Vagina (tissue), 2 donors: ENCODE measurements at regions of chr11 and their contacts with region 1.

Region 1: DNA sequence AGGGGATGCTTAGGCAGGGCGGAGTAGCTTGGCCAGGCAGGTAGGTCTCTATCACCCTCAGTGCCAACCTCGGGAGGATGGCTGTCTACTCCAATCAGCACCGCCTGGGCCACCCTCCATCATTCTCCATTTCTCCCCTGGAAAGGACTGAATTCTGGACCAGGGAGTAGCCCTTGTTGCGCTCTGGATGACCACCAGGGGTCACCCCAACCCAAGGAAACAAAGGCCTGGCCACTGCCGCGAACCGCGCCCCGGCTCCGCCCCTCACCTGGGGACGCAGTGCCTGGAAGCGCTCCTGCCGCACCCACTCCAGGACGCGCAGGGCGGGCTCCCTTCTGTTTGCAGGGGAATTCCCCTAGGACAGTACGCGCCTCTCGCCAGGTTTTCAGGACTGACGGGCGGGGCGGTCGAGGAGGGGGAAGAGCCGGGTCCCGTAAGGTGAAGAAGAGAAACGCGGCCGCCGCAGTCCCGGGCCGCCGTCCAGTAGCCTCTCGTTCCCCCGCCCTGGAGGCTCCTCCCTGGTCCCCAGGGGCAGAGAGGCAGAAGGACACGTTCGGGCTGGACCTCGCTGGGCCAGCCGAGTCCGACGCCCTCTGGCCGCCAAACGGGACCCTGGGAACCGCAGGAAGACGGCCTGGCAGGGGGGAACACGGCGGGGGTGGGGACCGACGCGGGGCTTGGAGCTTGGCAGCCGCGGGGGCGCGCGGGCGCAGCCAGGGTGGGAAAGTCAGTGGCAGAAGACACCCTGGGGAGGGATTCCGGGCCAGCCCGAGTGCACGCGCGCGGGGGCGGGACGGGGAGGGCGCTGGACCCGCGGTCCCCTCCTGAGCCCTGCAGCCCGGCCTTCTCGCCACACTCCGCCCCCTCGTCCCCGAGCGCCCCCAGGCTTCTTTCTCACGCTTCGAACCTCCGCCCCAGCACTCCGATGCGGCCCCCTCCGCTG is 7.1 kb downstream of the SCN4B start:
- DNase-seq: no peak
- H3K4me3 ChIP-seq: peak overlapping the region; percentile 59 to 76
- H3K27ac ChIP-seq: peak overlapping the region; percentile 67
- H3K4me1 ChIP-seq: peaks cover 7% of the 10 kb centered on the region
- H3K27me3 ChIP-seq: no peaks in the 10 kb centered on the region
- CTCF ChIP-seq: peak; percentile 89 to 98 (median 94)
- POLR2A ChIP-seq: no peak

Region 2: GRCh38 chr11:117771197-117771596 is 374.4 kb before region 1 on chr11:
- intact Hi-C with region 1: no loop called
- DNase-seq: no peak
- H3K4me3 ChIP-seq: no peak overlapping the region
- H3K27ac ChIP-seq: no peak overlapping the region
- H3K4me1 ChIP-seq: no peaks in the 10 kb centered on the region
- H3K27me3 ChIP-seq: no peaks in the 10 kb centered on the region
- CTCF ChIP-seq: no peak
- POLR2A ChIP-seq: no peak

Region 3: DNA sequence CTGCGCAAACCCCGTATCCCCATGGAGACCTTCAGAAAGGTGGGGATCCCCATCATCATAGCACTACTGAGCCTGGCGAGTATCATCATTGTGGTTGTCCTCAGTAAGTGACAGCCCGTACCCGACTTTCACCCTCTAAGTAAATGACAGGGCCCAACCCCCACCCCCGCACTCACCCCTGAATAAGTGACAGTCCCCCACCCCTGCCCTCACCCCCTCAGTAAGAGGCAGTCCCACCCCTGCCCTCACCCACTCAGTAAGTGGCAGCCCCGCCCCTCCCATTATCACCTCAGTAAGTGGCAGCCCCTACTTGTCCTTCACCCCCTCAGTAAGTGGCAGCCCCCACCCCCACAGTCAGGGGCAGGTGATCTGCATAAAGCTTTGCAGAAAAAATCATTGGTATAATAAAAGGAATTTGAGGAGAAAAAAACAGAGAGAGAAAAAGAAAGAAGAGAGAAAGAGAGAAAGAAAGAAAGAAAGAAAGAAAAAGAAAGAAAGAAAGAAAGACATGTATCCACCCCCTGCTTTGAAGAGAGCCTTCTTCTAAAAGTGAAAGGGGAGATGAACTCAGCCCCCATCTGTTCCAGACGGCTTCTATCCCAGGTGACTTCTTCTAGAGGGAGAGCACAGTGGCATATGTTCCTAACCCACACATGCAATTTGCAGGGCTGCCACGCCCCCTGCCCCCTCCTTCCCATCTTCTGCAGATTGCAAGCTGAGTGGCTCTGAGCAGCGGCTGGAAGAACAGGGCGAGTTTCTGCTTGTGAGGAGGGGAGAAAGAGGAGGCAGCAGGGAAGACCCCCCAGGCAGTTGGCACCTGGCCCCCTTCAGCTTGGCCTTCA is 46.3 kb before region 1 on chr11:
- intact Hi-C with region 1: no loop called
- DNase-seq: no peak
- H3K4me3 ChIP-seq: no peak overlapping the region
- H3K27ac ChIP-seq: no peak overlapping the region
- H3K4me1 ChIP-seq: no peaks in the 10 kb centered on the region
- H3K27me3 ChIP-seq: no peaks in the 10 kb centered on the region
- CTCF ChIP-seq: no peak
- POLR2A ChIP-seq: no peak

Region 4: GRCh38 chr11:118171269-118172062 is 25.9 kb after region 1 on chr11:
- intact Hi-C with region 1: loop called (anchors 2 kb)
- DNase-seq: no peak
- H3K4me3 ChIP-seq: no peak overlapping the region
- H3K27ac ChIP-seq: no peak overlapping the region
- H3K4me1 ChIP-seq: peaks cover 18% of the 10 kb centered on the region
- H3K27me3 ChIP-seq: no peaks in the 10 kb centered on the region
- CTCF ChIP-seq: peak; percentile 49 to 81 (median 78)
- POLR2A ChIP-seq: no peak

Region 5: GRCh38 chr11:118359295-118359958 is 213.9 kb after region 1 on chr11 and contains the start of gene UBE4A:
- intact Hi-C with region 1: loop called (anchors 10 kb)
- DNase-seq: peak in 1 of 2 donors; percentile 94
- H3K4me3 ChIP-seq: peak within 1 kb of the TSS; percentile 67 to 75
- H3K27ac ChIP-seq: peak within 1 kb of the TSS; percentile 57
- H3K4me1 ChIP-seq: peaks cover 30% of the 10 kb centered on the region
- H3K27me3 ChIP-seq: no peaks in the 10 kb centered on the region
- CTCF ChIP-seq: no peak
- POLR2A ChIP-seq: peak in 1 of 2 donors; percentile 24
- total RNA-seq, gene UBE4A: 31.9 TPM